CD8-positive, alpha-beta T cell (primary cell): ENCODE measurements at regions of chr1 and their contacts with region 1.

Region 1: GRCh38 chr1:47997289-47998200 is at the start of gene TRABD2B:
- DNase-seq: peak; percentile 18 to 71 (median 57)
- ATAC-seq: peak; percentile 52
- H3K4me3 ChIP-seq: peak within 1 kb of the TSS in 1 of 2 experiments; percentile 26
- H3K4me3 Mint-ChIP-seq: peak within 1 kb of the TSS; percentile 73
- H3K27ac ChIP-seq: no peak within 1 kb of the TSS
- H3K27ac Mint-ChIP-seq: no peak within 1 kb of the TSS
- H3K4me1 ChIP-seq: no peaks in the 10 kb centered on the region
- H3K4me1 Mint-ChIP-seq: peaks cover 7% of the 10 kb centered on the region
- H3K27me3 ChIP-seq: peaks cover 17% of the 10 kb centered on the region in 2 experiments
- H3K27me3 Mint-ChIP-seq: peaks cover 50% of the 10 kb centered on the region
- CTCF ChIP-seq: peak; percentile 83
- total RNA-seq, gene TRABD2B: not detected

Region 2: DNA sequence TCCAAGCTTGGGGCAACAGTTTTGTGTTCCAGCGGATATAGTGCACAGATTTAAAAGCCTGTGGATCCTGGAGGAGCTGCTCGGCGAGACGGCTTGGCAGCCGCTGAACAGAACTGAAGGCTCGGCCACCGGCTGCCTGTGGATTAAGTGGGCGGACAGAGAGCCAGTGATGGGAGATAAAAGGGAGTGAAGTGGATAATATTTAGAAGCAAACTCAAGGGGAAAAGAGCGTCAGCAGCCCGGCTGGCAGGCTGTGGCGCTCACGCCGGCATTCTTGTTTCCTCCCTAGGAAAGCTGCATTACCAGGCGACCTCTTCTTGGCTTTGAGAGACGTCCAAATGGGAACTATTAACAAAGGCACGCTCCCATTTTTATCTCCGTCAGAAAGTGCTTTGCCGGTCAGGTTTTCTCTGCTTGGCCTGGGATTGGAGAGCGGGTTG is 10.8 kb before region 1 on chr1:
- CTCF ChIA-PET with region 1: interaction called, 17 read pairs
- POLR2A ChIA-PET with region 1: no interaction called
- intact Hi-C with region 1: no loop called
- DNase-seq: no peak
- ATAC-seq: no peak
- H3K4me3 ChIP-seq: no peak overlapping the region
- H3K4me3 Mint-ChIP-seq: no peak overlapping the region
- H3K27ac ChIP-seq: no peak overlapping the region
- H3K27ac Mint-ChIP-seq: no peak overlapping the region
- H3K4me1 ChIP-seq: no peaks in the 10 kb centered on the region
- H3K4me1 Mint-ChIP-seq: peaks cover 2% of the 10 kb centered on the region
- H3K27me3 ChIP-seq: no peaks in the 10 kb centered on the region
- H3K27me3 Mint-ChIP-seq: peaks cover 31% of the 10 kb centered on the region
- CTCF ChIP-seq: no peak

Region 3: GRCh38 chr1:48019714-48020315 is 22.3 kb after region 1 on chr1:
- CTCF ChIA-PET with region 1: interaction called, 11 read pairs
- POLR2A ChIA-PET with region 1: no interaction called
- intact Hi-C with region 1: no loop called
- DNase-seq: no peak
- ATAC-seq: no peak
- H3K4me3 ChIP-seq: no peak overlapping the region
- H3K4me3 Mint-ChIP-seq: no peak overlapping the region
- H3K27ac ChIP-seq: no peak overlapping the region
- H3K27ac Mint-ChIP-seq: no peak overlapping the region
- H3K4me1 ChIP-seq: no peaks in the 10 kb centered on the region
- H3K4me1 Mint-ChIP-seq: no peaks in the 10 kb centered on the region
- H3K27me3 ChIP-seq: peaks cover 0 to 4% of the 10 kb centered on the region in 2 experiments
- H3K27me3 Mint-ChIP-seq: peaks cover 37% of the 10 kb centered on the region
- CTCF ChIP-seq: no peak

Region 4: GRCh38 chr1:48236716-48237470 is 239.3 kb after region 1 on chr1:
- CTCF ChIA-PET with region 1: interaction called, 8 read pairs
- POLR2A ChIA-PET with region 1: no interaction called
- intact Hi-C with region 1: loop called in 1 of 2 experiments (anchors 1 kb)
- DNase-seq: peak in 2 of 9 experiments; percentile 53 to 63
- ATAC-seq: peak; percentile 34
- H3K4me3 ChIP-seq: no peak overlapping the region
- H3K4me3 Mint-ChIP-seq: no peak overlapping the region
- H3K27ac ChIP-seq: no peak overlapping the region
- H3K27ac Mint-ChIP-seq: no peak overlapping the region
- H3K4me1 ChIP-seq: no peaks in the 10 kb centered on the region
- H3K4me1 Mint-ChIP-seq: no peaks in the 10 kb centered on the region
- H3K27me3 ChIP-seq: no peaks in the 10 kb centered on the region
- H3K27me3 Mint-ChIP-seq: no peaks in the 10 kb centered on the region
- CTCF ChIP-seq: peak; percentile 79